WTC11 (cell line): ENCODE measurements at regions of chr9 and their contacts with region 1.

Region 1: GRCh38 chr9:68507130-68507805 is 33.4 kb downstream of the TMEM252 start:
- DNase-seq: no peak
- ATAC-seq: no peak
- H3K4me3 Mint-ChIP-seq: no peak overlapping the region
- H3K27ac Mint-ChIP-seq: no peak overlapping the region
- H3K4me1 Mint-ChIP-seq: peaks cover 5% of the 10 kb centered on the region
- H3K27me3 Mint-ChIP-seq: peaks cover 100% of the 10 kb centered on the region
- CTCF ChIP-seq: peak; percentile 45; the same call in 1 of the 2 replicates

Region 2: GRCh38 chr9:68567565-68567964 is 60.3 kb after region 1 on chr9:
- CTCF ChIA-PET with region 1: interaction called, 16 read pairs
- POLR2A ChIA-PET with region 1: no interaction called
- DNase-seq: no peak
- ATAC-seq: no peak
- H3K4me3 Mint-ChIP-seq: no peak overlapping the region
- H3K27ac Mint-ChIP-seq: no peak overlapping the region
- H3K4me1 Mint-ChIP-seq: peaks cover 15% of the 10 kb centered on the region
- H3K27me3 Mint-ChIP-seq: peaks cover 52% of the 10 kb centered on the region
- CTCF ChIP-seq: no peak